ENCODE measurements at regions of chr19 and their contacts with region 1.

Region 1: GRCh38 chr19:44954824-44955586 is at the start of gene CLPTM1:
- DNase-seq: peak; percentile 85
- ATAC-seq: peak; percentile 89
- H3K4me3 Mint-ChIP-seq: peak within 1 kb of the TSS; percentile 97
- H3K27ac Mint-ChIP-seq: peak within 1 kb of the TSS; percentile 97
- H3K4me1 Mint-ChIP-seq: peaks cover 57% of the 10 kb centered on the region
- H3K27me3 Mint-ChIP-seq: no peaks in the 10 kb centered on the region
- CTCF ChIP-seq: no peak
- total RNA-seq, gene CLPTM1: 87.0 and 92.1 TPM in 2 replicates

Region 2: GRCh38 chr19:44689056-44689895 is 265.7 kb before region 1 on chr19:
- CTCF ChIA-PET with region 1: no interaction called
- POLR2A ChIA-PET with region 1: interaction called, 3 read pairs
- intact Hi-C with region 1: loop called (anchors 1 kb)
- DNase-seq: peak; percentile 73
- ATAC-seq: peak; percentile 51
- H3K4me3 Mint-ChIP-seq: no peak overlapping the region
- H3K27ac Mint-ChIP-seq: no peak overlapping the region
- H3K4me1 Mint-ChIP-seq: peaks cover 51% of the 10 kb centered on the region
- H3K27me3 Mint-ChIP-seq: peaks cover 11% of the 10 kb centered on the region
- CTCF ChIP-seq: no peak

Region 3: DNA sequence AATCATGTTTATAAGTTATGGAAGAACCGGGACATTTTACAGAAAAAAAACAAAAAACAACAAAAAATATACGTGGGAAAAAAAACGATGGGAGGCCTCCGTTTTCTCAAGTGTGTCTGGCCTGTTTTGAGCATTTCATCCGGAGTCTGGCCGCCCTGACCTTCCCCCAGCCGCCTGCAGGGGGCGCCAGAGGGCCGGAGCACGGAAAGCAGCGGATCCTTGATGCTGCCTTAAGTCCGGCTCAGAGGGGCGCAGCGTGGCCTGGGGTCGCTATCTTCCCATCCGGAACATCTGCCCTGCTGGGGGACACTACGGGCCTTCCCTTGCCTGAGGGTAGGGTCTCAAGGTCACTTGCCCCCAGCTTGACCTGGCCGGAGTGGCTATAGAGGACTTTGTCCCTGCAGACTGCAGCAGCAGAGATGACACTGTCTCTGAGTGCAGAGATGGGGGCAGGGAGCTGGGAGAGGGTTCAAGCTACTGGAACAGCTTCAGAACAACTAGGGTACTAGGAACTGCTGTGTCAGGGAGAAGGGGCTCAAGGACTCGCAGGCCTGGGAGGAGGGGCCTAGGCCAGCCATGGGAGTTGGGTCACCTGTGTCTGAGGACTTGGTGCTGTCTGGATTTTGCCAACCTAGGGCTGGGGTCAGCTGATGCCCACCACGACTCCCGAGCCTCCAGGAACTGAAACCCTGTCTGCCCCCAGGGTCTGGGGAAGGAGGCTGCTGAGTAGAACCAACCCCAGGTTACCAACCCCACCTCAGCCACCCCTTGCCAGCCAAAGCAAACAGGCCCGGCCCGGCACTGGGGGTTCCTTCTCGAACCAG is 51.2 kb before region 1 on chr19:
- CTCF ChIA-PET with region 1: interaction called, 10 read pairs
- POLR2A ChIA-PET with region 1: interaction called, 9 read pairs
- intact Hi-C with region 1: loop called (anchors 1 kb)
- DNase-seq: peak; percentile 78
- ATAC-seq: peak; percentile 68
- H3K4me3 Mint-ChIP-seq: no peak overlapping the region
- H3K27ac Mint-ChIP-seq: no peak overlapping the region
- H3K4me1 Mint-ChIP-seq: peaks cover 18% of the 10 kb centered on the region
- H3K27me3 Mint-ChIP-seq: peaks cover 15% of the 10 kb centered on the region
- CTCF ChIP-seq: peak; percentile 96

Region 4: GRCh38 chr19:44912854-44913253 is 42.2 kb before region 1 on chr19:
- CTCF ChIA-PET with region 1: interaction called, 4 read pairs
- POLR2A ChIA-PET with region 1: interaction called, 12 read pairs
- intact Hi-C with region 1: loop called (anchors 2 kb)
- DNase-seq: no peak
- ATAC-seq: no peak
- H3K4me3 Mint-ChIP-seq: no peak overlapping the region
- H3K27ac Mint-ChIP-seq: no peak overlapping the region
- H3K4me1 Mint-ChIP-seq: peaks cover 11% of the 10 kb centered on the region
- H3K27me3 Mint-ChIP-seq: peaks cover 28% of the 10 kb centered on the region
- CTCF ChIP-seq: no peak

Region 5: DNA sequence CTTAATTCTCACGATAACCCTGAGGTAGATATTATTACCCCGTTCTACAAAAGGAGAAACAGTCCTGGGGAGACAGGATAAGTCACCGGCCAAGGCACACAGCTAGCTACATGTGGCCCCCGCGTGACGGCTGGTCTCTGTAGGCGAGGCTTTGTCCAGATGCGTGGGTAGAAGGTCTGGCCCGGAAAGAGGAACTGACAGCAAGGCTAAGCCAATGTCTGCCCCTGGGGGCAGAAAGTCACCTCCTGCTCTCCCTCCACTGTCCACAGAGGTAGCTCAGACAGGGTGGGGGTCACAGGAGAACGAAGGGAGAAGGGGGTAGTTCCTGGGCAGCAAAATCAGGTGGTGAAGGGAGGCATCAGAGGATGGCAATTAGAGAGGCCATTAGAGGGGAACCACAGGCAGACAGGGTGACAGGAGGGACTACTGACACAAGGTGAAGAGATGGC is 11.2 kb before region 1 on chr19:
- CTCF ChIA-PET with region 1: interaction called, 3 read pairs
- POLR2A ChIA-PET with region 1: interaction called, 9 read pairs
- intact Hi-C with region 1: loop called (anchors 1 kb)
- DNase-seq: peak; percentile 34
- ATAC-seq: peak; percentile 94
- H3K4me3 Mint-ChIP-seq: peak overlapping the region; percentile 44
- H3K27ac Mint-ChIP-seq: peak overlapping the region; percentile 81
- H3K4me1 Mint-ChIP-seq: peaks cover 14% of the 10 kb centered on the region
- H3K27me3 Mint-ChIP-seq: no peaks in the 10 kb centered on the region
- CTCF ChIP-seq: no peak

Region 6: GRCh38 chr19:44988896-44989556 is 34.0 kb after region 1 on chr19:
- CTCF ChIA-PET with region 1: no interaction called
- POLR2A ChIA-PET with region 1: no interaction called
- intact Hi-C with region 1: no loop called
- DNase-seq: peak; percentile 57
- ATAC-seq: peak; percentile 97
- H3K4me3 Mint-ChIP-seq: no peak overlapping the region
- H3K27ac Mint-ChIP-seq: no peak overlapping the region
- H3K4me1 Mint-ChIP-seq: no peaks in the 10 kb centered on the region
- H3K27me3 Mint-ChIP-seq: no peaks in the 10 kb centered on the region
- CTCF ChIP-seq: no peak

Region 7: GRCh38 chr19:45079063-45079910 is 124.3 kb after region 1 on chr19 and contains the start of gene GEMIN7:
- CTCF ChIA-PET with region 1: no interaction called
- POLR2A ChIA-PET with region 1: interaction called, 10 read pairs
- intact Hi-C with region 1: no loop called
- DNase-seq: peak; percentile 85
- ATAC-seq: peak; percentile 33
- H3K4me3 Mint-ChIP-seq: peak within 1 kb of the TSS; percentile 97
- H3K27ac Mint-ChIP-seq: peak within 1 kb of the TSS; percentile 90
- H3K4me1 Mint-ChIP-seq: peaks cover 60% of the 10 kb centered on the region
- H3K27me3 Mint-ChIP-seq: no peaks in the 10 kb centered on the region
- CTCF ChIP-seq: no peak
- total RNA-seq, gene GEMIN7: 37.0 and 38.7 TPM in 2 replicates

Measured in activated B cell treated with CpG ODN at 0.5 μM for 24 hours (primary cell).